ENCODE measurements at regions of chr9 and their contacts with region 1.

Region 1: DNA sequence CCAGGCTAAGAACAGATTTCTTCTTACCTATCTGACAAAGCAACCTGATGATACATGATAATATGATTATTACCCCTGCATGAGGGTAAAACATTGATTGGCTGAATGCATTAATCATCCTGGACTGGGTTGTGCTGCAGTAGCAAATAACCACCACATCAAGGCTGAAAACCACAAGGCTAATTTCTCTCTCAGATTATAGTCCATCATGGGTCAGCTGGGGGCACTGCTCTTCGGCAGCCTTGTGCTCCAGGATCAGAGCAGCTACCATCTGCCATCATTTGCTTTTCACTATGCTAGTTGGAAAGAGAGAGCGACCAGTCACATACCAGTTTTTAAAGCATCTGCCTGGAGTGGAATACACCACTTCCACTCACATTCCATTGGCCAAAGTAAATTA is 383.5 kb downstream of the RASEF start:
- DNase-seq: no peak
- ATAC-seq: no peak
- H3K4me3 ChIP-seq: no peak overlapping the region
- H3K27ac ChIP-seq: no peak overlapping the region
- H3K4me1 ChIP-seq: no peaks in the 10 kb centered on the region
- H3K27me3 ChIP-seq: no peaks in the 10 kb centered on the region; the same call in 1 of the 2 replicates
- CTCF ChIP-seq: no peak
- POLR2A ChIP-seq: no peak
- RAD21 ChIP-seq: no peak

Region 2: GRCh38 chr9:82613498-82613897 is 66.0 kb before region 1 on chr9:
- CTCF ChIA-PET with region 1: no interaction called
- POLR2A ChIA-PET with region 1: no interaction called
- dilution Hi-C with region 1: no loop called
- in situ Hi-C with region 1: loop called (anchors 10 kb)
- intact Hi-C with region 1: no loop called
- DNase-seq: no peak
- ATAC-seq: no peak
- H3K4me3 ChIP-seq: no peak overlapping the region
- H3K27ac ChIP-seq: no peak overlapping the region
- H3K4me1 ChIP-seq: no peaks in the 10 kb centered on the region; the same call in 1 of the 2 replicates
- H3K27me3 ChIP-seq: peaks cover 5% of the 10 kb centered on the region; the same call in 1 of the 2 replicates
- CTCF ChIP-seq: no peak
- POLR2A ChIP-seq: no peak
- RAD21 ChIP-seq: no peak

Region 3: GRCh38 chr9:82732928-82733327 is 53.5 kb after region 1 on chr9:
- CTCF ChIA-PET with region 1: no interaction called
- POLR2A ChIA-PET with region 1: no interaction called
- dilution Hi-C with region 1: no loop called
- in situ Hi-C with region 1: no loop called
- intact Hi-C with region 1: no loop called
- DNase-seq: no peak
- ATAC-seq: no peak
- H3K4me3 ChIP-seq: no peak overlapping the region
- H3K27ac ChIP-seq: no peak overlapping the region
- H3K4me1 ChIP-seq: no peaks in the 10 kb centered on the region
- H3K27me3 ChIP-seq: no peaks in the 10 kb centered on the region
- CTCF ChIP-seq: no peak
- POLR2A ChIP-seq: no peak
- RAD21 ChIP-seq: no peak